Activated naive CD4-positive, alpha-beta T cell treated with anti-CD3 and anti-CD28 coated beads for 36 hours (primary cell): ENCODE measurements at regions of chr12 and their contacts with region 1.

Region 1: DNA sequence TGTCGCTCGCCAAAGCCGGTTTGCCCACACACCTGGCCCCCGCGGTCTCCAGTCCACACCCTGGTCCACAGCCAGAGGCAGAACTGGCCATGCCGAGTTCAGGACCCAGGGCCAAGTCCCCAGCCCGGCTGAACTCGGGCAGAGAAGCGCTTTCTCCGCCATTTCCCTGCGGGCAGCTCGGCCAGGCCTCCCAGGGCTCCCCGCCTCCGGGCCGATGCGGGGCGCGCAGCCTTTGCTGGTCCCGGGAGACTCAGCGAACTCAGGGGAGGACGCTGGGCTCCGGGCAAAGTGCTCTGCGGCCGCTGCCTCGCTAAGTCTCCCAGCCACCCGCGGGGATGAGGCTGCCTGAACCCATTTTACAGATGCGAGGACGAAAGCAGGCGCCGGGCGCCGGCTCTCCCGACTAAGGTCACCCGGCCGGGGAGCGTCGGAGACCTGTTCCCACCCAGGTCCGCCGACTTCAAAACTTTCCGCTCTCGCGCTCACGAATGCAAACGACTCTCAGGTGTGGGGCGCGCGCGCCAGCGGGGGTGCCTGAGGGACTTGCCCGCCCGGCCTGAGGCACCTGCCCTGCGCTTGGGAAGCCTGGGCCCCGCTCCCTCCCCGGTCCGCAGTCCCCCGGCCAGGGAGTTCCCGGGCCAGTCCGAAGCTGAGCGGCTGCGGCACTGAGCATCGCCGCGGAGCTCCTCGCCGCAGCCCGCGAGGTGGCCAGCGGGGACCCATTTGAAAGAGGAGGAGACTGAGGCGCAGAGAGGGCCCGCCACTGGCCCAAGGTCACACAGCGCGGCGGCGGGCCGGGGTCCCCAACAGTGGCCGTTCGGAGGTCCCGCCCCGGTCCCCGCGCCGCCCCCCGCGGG is 627 bp downstream of the TESC start:
- DNase-seq: peak; percentile 53
- H3K4me3 Mint-ChIP-seq: peak overlapping the region; percentile 67
- H3K27ac Mint-ChIP-seq: no peak overlapping the region
- H3K4me1 Mint-ChIP-seq: peaks cover 10% of the 10 kb centered on the region
- H3K27me3 Mint-ChIP-seq: peaks cover 31% of the 10 kb centered on the region

Region 2: DNA sequence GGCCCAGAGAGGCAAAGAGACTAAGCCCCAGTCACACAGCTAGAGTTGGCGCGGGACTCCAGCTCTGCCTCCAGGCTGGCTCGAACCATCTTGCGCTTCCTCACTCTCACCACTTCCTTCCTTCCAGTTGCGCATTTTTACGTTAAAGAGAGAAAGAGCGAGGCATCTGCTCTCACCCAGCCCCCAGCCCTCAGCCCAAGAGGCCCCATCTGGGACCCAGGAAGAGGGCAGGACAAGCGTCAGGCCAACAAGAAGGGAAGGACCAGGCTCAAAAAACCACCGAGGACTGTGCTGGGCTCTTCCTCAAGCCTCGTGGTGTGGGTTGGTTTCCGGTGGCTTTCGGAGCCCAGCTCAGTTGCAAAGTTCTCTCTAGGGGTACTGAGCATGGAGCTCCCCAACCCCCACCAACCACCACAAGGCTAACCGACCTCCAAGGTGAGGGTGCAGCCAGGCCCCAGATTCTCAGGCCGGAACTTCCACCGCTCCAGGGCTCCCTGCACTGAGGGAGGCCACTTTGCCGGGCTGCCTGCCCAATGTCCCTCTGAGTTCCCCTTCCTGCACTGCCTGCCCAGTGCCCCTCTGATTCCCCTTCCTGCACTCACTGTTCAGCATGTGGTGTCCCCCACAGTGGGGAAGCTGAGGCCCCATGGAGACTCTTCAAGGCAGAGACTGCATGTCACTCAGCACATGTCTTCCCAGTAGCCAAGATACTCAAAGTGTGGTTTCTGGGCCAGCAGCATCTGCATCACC is 35.3 kb before region 1 on chr12:
- CTCF ChIA-PET with region 1: no interaction called
- intact Hi-C with region 1: loop called (anchors 1 kb)
- DNase-seq: peak; percentile 57
- H3K4me3 Mint-ChIP-seq: no peak overlapping the region
- H3K27ac Mint-ChIP-seq: peak overlapping the region; percentile 70
- H3K4me1 Mint-ChIP-seq: peaks cover 20% of the 10 kb centered on the region
- H3K27me3 Mint-ChIP-seq: no peaks in the 10 kb centered on the region

Region 3: DNA sequence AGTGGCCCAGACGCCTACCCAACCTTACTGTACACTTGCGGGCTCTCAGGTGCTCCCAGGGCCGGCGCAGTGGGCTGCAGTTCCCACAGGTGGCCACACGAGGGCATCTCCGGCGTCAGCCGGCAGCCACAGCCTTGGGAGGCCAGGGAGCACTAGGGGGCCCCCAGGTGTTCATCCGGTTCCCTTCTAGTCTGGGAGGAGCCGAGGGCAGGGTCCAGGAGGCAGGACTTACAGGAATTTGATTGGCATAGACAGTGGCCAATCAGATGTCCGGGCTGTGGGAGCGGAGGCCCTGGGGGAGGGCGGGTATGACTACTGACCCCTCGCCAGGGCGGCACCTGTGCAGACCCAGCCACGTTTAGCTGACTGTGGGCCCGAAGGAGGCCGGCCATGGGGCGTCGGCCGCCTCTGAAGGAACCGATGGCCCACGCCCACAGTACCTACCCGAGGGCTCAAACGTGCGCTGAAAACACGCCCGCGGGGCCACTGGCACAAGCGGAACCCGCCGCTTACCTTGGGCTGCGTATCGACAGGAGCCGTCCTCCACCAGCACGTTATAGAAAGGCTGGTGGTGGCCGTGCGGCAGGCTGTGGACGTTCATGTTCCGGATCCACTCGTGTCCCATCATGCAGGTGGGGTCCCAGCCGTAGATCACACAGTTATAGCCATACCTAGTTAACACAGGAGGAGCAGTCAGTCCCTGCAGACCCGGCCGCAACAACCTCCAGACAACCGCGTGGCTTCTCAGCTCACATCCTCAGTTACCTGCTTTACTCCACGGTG is 56.9 kb after region 1 on chr12:
- CTCF ChIA-PET with region 1: no interaction called
- intact Hi-C with region 1: loop called (anchors 1 kb)
- DNase-seq: peak; percentile 81
- H3K4me3 Mint-ChIP-seq: no peak overlapping the region
- H3K27ac Mint-ChIP-seq: no peak overlapping the region
- H3K4me1 Mint-ChIP-seq: peaks cover 17% of the 10 kb centered on the region
- H3K27me3 Mint-ChIP-seq: no peaks in the 10 kb centered on the region

Region 4: DNA sequence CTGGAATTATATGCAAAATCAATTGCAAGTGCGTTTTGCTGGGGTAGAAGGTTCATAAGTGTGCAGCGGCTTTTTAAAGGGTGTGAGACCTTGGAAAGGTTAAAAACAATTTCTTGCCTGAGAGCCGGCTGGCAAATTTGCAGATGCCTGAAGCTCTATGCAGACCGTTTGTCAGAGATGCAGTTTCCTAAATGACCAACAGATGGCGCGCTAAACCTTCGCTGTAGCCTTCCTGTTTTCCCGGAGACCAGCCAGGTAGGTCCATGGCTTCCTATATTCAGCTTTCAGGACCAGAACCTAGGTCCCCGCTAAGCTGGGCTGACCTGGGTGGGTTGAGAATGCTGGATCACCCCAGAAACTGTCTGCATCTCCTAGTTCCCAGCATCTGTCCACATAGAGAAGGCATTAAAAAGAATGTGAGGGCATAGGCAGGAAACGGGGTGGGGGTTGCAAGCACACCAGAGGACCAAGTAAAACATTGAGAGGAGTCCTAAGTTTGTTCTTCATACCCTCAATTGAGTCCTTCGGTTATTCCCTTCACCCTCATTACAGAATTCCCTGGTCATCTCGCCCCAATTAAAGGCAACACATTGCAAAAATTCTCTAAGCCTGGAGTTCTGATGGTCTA is 268.5 kb after region 1 on chr12:
- CTCF ChIA-PET with region 1: no interaction called
- intact Hi-C with region 1: no loop called
- DNase-seq: peak; percentile 77
- H3K4me3 Mint-ChIP-seq: no peak overlapping the region
- H3K27ac Mint-ChIP-seq: no peak overlapping the region
- H3K4me1 Mint-ChIP-seq: no peaks in the 10 kb centered on the region
- H3K27me3 Mint-ChIP-seq: peaks cover 39% of the 10 kb centered on the region